ENCODE measurements at regions of chr18 and their contacts with region 1.

Region 1: GRCh38 chr18:27605107-27605834 is 420.2 kb upstream of the CHST9 start:
- DNase-seq: no peak
- ATAC-seq: peak; percentile 86
- H3K4me3 ChIP-seq: no peak overlapping the region
- H3K27ac ChIP-seq: no peak overlapping the region
- H3K4me1 ChIP-seq: no peaks in the 10 kb centered on the region; the same call in 1 of the 2 replicates
- H3K27me3 ChIP-seq: no peaks in the 10 kb centered on the region
- CTCF ChIP-seq: peak; percentile 77

Region 2: DNA sequence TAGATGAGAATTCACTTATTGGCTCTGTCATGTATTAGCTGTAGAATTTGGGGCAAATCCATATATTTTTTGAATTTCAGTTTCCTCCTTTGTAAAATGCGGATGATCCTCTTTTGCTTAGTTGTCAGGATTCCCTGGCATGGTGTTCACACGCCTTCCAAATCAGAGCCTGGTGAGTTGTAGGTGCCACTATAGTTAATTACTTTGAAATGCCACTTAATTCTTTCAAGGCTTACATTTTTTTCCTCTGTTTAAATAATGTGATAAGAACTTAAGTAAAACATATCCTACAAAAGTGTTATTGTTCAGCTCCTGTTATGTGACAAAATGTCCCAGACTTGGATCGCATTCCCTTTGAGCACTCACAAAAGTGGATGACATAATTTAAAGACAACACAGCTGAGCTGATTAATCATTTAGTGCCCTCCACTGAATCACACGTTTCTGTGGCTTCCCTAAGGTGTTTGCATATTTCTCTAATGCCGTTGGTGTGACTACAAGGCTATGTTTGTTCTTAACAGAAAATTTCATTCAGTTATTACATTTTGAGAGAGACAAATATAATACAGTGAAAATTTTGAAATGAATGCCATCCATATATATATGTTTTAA is 51.0 kb after region 1 on chr18:
- CTCF ChIA-PET with region 1: no interaction called
- POLR2A ChIA-PET with region 1: no interaction called
- in situ Hi-C with region 1: no loop called
- intact Hi-C with region 1: no loop called
- DNase-seq: peak; percentile 18
- ATAC-seq: peak; percentile 70
- H3K4me3 ChIP-seq: no peak overlapping the region
- H3K27ac ChIP-seq: no peak overlapping the region
- H3K4me1 ChIP-seq: no peaks in the 10 kb centered on the region
- H3K27me3 ChIP-seq: no peaks in the 10 kb centered on the region
- CTCF ChIP-seq: no peak

Region 3: DNA sequence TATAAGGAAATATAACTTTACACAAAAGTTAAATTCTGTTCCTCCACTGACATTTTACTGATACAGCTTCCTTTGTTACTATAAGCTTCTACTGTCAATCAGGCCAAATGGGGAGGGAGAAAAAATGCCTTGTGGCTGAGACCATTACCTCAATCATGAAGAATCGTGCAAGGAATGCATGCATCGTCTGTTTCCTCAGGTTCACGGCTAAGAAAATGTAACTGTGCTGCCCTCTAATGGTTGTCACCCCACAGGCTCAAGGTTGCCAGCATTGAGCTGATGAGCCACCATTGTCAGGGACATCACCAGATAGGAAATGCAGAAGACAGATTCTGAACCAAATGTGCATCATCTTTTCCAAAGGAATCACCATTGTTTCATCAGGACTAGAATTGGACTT is 144.7 kb after region 1 on chr18:
- CTCF ChIA-PET with region 1: interaction called, 8 read pairs
- POLR2A ChIA-PET with region 1: no interaction called
- in situ Hi-C with region 1: no loop called
- intact Hi-C with region 1: loop called (anchors 10 kb)
- DNase-seq: no peak
- ATAC-seq: no peak
- H3K4me3 ChIP-seq: no peak overlapping the region
- H3K27ac ChIP-seq: no peak overlapping the region
- H3K4me1 ChIP-seq: no peaks in the 10 kb centered on the region
- H3K27me3 ChIP-seq: no peaks in the 10 kb centered on the region
- CTCF ChIP-seq: peak; percentile 26

Region 4: GRCh38 chr18:28189400-28190239 is 584.3 kb after region 1 on chr18:
- CTCF ChIA-PET with region 1: no interaction called
- POLR2A ChIA-PET with region 1: no interaction called
- in situ Hi-C with region 1: no loop called
- intact Hi-C with region 1: loop called (anchors 5 kb)
- DNase-seq: no peak
- ATAC-seq: peak; percentile 85
- H3K4me3 ChIP-seq: no peak overlapping the region
- H3K27ac ChIP-seq: no peak overlapping the region
- H3K4me1 ChIP-seq: no peaks in the 10 kb centered on the region
- H3K27me3 ChIP-seq: no peaks in the 10 kb centered on the region
- CTCF ChIP-seq: peak; percentile 74